Activated naive CD8-positive, alpha-beta T cell treated with anti-CD3 and anti-CD28 coated beads, Interleukin-2, amount 10 ng/mL, durations not matched to agents 7 days and 5 days (primary cell): ENCODE measurements at regions of chr2 and their contacts with region 1.

Region 1: GRCh38 chr2:39124000-39124745 is 3.3 kb upstream of the SOS1 start:
- DNase-seq: peak; percentile 96
- ATAC-seq: peak; percentile 72
- H3K4me3 Mint-ChIP-seq: peak overlapping the region; percentile 95
- H3K27ac Mint-ChIP-seq: peak overlapping the region; percentile 96
- H3K4me1 Mint-ChIP-seq: peaks cover 53% of the 10 kb centered on the region
- H3K27me3 Mint-ChIP-seq: no peaks in the 10 kb centered on the region

Region 2: GRCh38 chr2:38981003-38981669 is 143.0 kb before region 1 on chr2:
- POLR2A ChIA-PET with region 1: no interaction called
- DNase-seq: no peak
- ATAC-seq: no peak
- H3K4me3 Mint-ChIP-seq: no peak overlapping the region
- H3K27ac Mint-ChIP-seq: no peak overlapping the region
- H3K4me1 Mint-ChIP-seq: no peaks in the 10 kb centered on the region
- H3K27me3 Mint-ChIP-seq: no peaks in the 10 kb centered on the region

Region 3: GRCh38 chr2:39135690-39136259 is 11.6 kb after region 1 on chr2:
- POLR2A ChIA-PET with region 1: interaction called, 35 read pairs
- DNase-seq: no peak
- ATAC-seq: peak; percentile 49
- H3K4me3 Mint-ChIP-seq: peak overlapping the region; percentile 62
- H3K27ac Mint-ChIP-seq: peak overlapping the region; percentile 97
- H3K4me1 Mint-ChIP-seq: peaks cover 68% of the 10 kb centered on the region
- H3K27me3 Mint-ChIP-seq: no peaks in the 10 kb centered on the region

Region 4: DNA sequence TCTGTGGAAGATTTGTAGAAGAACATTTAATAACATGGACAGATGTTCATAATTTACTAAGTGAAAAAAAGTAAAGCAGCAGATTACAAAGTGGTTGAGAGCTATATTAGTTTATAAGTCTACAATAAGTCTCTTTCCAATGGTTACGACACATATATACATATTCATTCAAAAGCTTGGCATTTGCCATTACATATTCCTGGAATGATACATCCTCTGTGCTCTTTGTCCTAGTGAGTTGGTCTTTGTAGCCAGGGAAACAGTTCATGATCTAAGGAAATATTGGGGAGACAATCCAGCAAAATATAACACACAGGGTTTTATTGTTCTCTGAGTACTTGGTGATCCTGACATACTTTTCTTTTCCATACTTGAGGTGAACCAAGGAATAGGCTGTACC is 29.1 kb after region 1 on chr2:
- POLR2A ChIA-PET with region 1: no interaction called
- DNase-seq: no peak
- ATAC-seq: no peak
- H3K4me3 Mint-ChIP-seq: no peak overlapping the region
- H3K27ac Mint-ChIP-seq: no peak overlapping the region
- H3K4me1 Mint-ChIP-seq: peaks cover 11% of the 10 kb centered on the region
- H3K27me3 Mint-ChIP-seq: no peaks in the 10 kb centered on the region

Region 5: GRCh38 chr2:39210846-39211245 is 86.7 kb after region 1 on chr2:
- POLR2A ChIA-PET with region 1: interaction called, 119 read pairs
- DNase-seq: no peak
- ATAC-seq: no peak
- H3K4me3 Mint-ChIP-seq: no peak overlapping the region
- H3K27ac Mint-ChIP-seq: peak overlapping the region; percentile 15
- H3K4me1 Mint-ChIP-seq: peaks cover 39% of the 10 kb centered on the region
- H3K27me3 Mint-ChIP-seq: no peaks in the 10 kb centered on the region

Region 6: GRCh38 chr2:39216346-39217191 is 92.4 kb after region 1 on chr2:
- POLR2A ChIA-PET with region 1: interaction called, 119 read pairs
- DNase-seq: peak; percentile 73
- ATAC-seq: peak; percentile 88
- H3K4me3 Mint-ChIP-seq: peak overlapping the region; percentile 71
- H3K27ac Mint-ChIP-seq: peak overlapping the region; percentile 96
- H3K4me1 Mint-ChIP-seq: peaks cover 68% of the 10 kb centered on the region
- H3K27me3 Mint-ChIP-seq: no peaks in the 10 kb centered on the region